Colonic mucosa (tissue), 4 donors: ENCODE measurements at regions of chr22 and their contacts with region 1.

Region 1: DNA sequence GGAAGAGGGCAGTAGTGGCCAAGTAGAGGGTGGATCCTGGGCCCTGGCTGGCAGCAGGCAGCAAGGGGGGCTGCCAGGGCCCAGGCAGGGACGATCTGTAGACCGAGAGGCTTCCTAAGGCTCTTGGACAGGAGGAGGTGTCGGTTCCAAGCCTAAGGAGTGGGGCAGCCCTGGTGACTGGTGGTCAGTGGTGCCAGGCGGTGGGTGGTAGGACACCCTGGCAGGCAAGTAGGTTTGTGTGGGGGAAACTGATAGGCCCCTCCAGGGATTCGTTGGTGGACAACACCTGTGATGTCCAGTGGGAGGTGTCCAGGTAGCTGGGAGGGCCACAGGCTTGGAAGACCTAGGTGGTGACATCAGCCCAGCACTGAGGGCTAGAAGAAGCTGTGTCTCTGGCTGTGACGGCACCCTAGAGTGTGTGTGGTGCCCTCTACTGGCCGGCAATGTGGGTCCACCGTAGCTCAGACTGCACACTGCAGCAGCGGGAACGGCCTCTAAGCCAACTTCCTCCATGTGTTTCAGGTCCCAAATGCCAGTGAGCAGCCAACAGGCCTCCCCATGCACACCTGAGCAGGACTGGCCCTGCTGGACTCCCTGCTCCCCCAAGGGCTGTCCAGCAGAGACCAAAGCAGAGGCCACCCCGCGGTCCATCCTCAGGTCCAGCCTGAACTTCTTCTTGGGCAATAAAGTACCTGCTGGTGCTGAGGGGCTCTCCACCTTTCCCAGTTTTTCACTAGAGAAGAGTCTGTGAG is 9.4 kb upstream of the SAMM50 start:
- DNase-seq: peak; percentile 63
- H3K4me3 ChIP-seq: no peak overlapping the region
- H3K27ac ChIP-seq: no peak overlapping the region
- H3K4me1 ChIP-seq: no peaks in the 10 kb centered on the region
- H3K27me3 ChIP-seq: no peaks in the 10 kb centered on the region
- CTCF ChIP-seq: peak; percentile 56

Region 2: DNA sequence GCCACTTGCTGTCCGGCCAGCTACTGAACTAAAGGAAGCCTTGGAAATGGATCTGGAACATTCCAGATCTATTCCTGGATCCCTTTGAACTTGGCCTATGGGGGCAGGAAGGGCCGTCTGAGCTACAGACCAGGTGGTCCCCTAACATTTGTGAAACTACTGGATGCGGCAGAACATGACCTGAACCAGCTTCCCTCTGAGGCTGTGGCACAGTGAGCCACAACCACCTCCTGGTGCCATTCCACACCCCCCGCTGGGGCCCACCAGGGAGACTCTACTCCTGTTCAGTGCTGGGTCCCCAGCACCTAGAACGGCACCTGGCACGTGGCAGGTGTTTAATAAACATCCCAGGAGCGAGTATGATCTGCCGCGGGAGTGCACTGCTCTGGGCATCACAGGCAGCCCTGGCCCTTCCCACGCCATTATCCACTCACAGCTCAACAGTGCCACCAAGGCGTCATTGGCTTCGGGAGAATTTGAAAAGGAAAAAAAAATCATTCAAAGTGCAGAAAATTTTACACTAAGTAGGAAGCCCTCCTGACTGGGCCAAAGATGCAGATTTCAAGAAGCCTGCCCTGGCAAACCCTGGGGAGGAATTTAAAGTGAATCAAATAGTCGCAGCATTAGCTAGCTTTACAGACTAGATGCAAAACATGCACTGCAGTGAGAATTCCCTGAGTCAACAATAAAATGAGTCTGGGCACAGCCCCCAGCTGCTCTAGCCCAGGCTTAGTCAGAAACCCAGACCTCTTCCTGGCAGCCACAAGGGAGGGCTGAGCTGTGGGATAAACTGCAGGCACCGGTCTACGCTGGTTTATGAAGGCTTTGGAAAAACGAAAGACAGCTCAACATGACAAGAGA is 119.4 kb before region 1 on chr22:
- intact Hi-C with region 1: loop called (anchors 10 kb)
- DNase-seq: no peak
- H3K4me3 ChIP-seq: no peak overlapping the region
- H3K27ac ChIP-seq: no peak overlapping the region
- H3K4me1 ChIP-seq: no peaks in the 10 kb centered on the region
- H3K27me3 ChIP-seq: no peaks in the 10 kb centered on the region
- CTCF ChIP-seq: no peak

Region 3: GRCh38 chr22:44012162-44012561 is 66.4 kb after region 1 on chr22:
- intact Hi-C with region 1: no loop called
- DNase-seq: no peak
- H3K4me3 ChIP-seq: no peak overlapping the region
- H3K27ac ChIP-seq: no peak overlapping the region
- H3K4me1 ChIP-seq: no peaks in the 10 kb centered on the region
- H3K27me3 ChIP-seq: no peaks in the 10 kb centered on the region
- CTCF ChIP-seq: no peak